H1 (cell line): ENCODE measurements at regions of chr7 and their contacts with region 1.

Region 1: DNA sequence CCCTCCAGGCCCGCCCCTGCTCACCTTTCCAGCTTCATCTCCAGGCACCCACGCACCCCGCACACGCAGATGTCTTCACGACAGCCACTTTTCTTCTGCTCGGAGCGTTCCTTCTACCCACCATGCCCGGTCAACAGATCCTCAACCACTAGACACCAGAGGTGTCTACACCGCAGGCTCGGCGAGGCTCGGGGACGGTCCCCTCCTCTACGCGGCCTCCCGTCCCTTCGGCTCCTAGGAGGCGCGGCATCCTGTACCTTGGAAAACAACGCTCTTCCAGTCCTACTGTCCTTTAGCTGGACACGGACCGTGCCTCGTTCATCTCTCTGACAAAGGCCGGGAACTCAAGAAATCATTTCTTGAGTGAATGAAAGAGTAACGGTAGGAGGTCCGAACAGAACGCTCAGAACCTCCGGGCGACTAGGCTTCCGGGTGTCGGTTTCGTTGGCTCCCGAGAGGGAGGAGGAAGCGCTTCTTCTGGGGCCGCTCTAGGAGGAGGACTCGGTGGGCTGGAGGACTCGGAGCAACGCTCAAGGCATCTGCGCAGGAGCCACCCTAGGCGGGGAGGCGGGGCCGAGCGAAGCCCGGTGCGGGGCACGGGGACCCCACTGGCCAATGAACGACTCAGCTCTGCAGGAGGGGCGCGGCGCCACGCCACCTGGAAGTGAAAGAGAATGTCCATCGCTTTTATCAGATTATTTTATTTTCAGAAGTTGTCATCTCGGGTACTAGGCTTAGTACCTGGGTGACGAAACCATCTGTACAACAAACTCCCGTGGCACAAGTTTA is 7.2 kb upstream of the FIS1 start:
- DNase-seq: peak; percentile 94 to 99
- H3K4me3 ChIP-seq: peak overlapping the region; percentile 86 to 98 (median 92)
- H3K27ac ChIP-seq: 0 out of 2 replicates have a peak overlapping the region, but pooled peaks have one; percentile 65
- H3K4me1 ChIP-seq: no peaks in the 10 kb centered on the region
- H3K27me3 ChIP-seq: no peaks in the 10 kb centered on the region
- CTCF ChIP-seq: no peak
- EP300 ChIP-seq: no peak
- POLR2A ChIP-seq: peak in 1 of 2 experiments; percentile 72; a peak in 2 of 3 replicates
- RAD21 ChIP-seq: no peak

Region 2: DNA sequence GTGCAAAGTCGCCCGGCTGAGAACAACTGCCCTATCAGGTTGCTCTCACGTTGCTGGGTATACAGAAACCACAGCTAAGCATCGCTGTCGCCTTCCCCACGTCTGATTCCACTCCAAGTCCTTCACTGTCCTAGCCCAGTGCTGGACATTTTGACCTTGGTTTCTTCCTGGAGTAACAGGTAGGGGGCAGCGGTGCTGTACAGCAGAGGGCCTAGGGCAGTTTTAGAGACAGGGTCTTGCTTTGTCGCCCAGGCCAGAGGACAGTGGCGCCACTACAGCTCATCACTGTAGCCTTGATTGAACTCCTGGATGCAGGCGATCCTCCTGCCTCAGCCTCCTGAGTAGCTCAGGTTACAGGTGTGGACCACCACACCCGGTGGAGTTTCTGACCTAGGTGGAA is 17.0 kb before region 1 on chr7:
- CTCF ChIA-PET with region 1: interaction called, 8 read pairs
- POLR2A ChIA-PET with region 1: interaction called, 10 read pairs
- DNase-seq: peak in 1 of 2 experiments; percentile 63
- H3K4me3 ChIP-seq: no peak overlapping the region
- H3K27ac ChIP-seq: no peak overlapping the region
- H3K4me1 ChIP-seq: peaks cover 0 to 24% (median 12%) of the 10 kb centered on the region in 4 experiments; a peak in 6 of 7 replicates
- H3K27me3 ChIP-seq: no peaks in the 10 kb centered on the region
- CTCF ChIP-seq: peak in 2 of 3 experiments; percentile 73; a peak in 3 of 4 replicates
- EP300 ChIP-seq: no peak
- POLR2A ChIP-seq: no peak
- RAD21 ChIP-seq: peak; percentile 69 to 78

Region 3: GRCh38 chr7:101265622-101266516 is 13.8 kb after region 1 on chr7:
- CTCF ChIA-PET with region 1: interaction called, 5 read pairs
- POLR2A ChIA-PET with region 1: interaction called, 14 read pairs
- DNase-seq: no peak
- H3K4me3 ChIP-seq: no peak overlapping the region
- H3K27ac ChIP-seq: no peak overlapping the region
- H3K4me1 ChIP-seq: peaks cover 0 to 3% (median 0%) of the 10 kb centered on the region in 4 experiments; a peak in 1 of 7 replicates
- H3K27me3 ChIP-seq: no peaks in the 10 kb centered on the region
- CTCF ChIP-seq: no peak
- EP300 ChIP-seq: no peak
- POLR2A ChIP-seq: no peak
- RAD21 ChIP-seq: no peak

Region 4: GRCh38 chr7:101273206-101273605 is 21.1 kb after region 1 on chr7:
- CTCF ChIA-PET with region 1: interaction called, 7 read pairs
- POLR2A ChIA-PET with region 1: interaction called, 14 read pairs
- DNase-seq: no peak
- H3K4me3 ChIP-seq: no peak overlapping the region
- H3K27ac ChIP-seq: no peak overlapping the region
- H3K4me1 ChIP-seq: peaks cover 0 to 10% (median 6%) of the 10 kb centered on the region in 4 experiments; a peak in 3 of 7 replicates
- H3K27me3 ChIP-seq: no peaks in the 10 kb centered on the region
- CTCF ChIP-seq: no peak
- EP300 ChIP-seq: no peak
- POLR2A ChIP-seq: no peak
- RAD21 ChIP-seq: no peak

Region 5: DNA sequence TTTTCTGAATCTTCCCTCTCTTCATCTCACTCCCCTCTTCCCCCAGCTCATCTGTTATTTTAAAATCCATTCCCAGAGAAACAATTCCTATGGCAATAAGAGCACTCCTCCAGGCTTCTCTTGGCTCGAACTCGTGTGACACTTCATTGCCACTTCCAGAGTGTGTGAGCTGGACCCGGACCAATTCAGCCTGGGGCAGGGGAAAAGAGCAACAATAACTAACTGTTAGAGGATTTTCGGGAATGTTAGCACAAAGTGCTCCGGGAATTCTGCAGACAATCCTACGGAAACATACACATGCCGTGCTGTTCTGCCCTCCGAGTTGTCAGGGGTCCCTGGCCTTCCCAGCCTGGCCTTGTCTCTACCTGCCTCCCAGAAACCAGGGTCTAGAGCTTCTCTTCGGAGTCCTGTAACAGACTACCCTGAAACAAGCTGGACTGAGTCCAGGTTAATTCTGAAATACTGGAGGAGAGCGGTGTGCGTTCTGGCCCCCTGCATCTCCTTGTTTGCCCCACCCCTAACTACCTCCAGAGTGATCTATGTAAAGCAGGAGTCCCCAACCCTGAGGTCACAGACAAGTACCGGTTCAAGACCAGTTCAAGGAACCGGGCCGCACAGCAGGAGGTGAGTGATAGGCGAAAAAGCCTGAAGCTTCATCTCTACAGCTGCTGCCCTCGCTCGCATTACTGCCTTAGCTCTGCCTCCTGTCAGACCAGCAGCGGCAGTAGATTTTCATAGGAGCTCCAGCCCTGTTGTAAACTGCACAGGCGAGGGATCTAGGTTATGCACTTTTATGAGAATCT is 121.9 kb after region 1 on chr7:
- CTCF ChIA-PET with region 1: no interaction called
- POLR2A ChIA-PET with region 1: no interaction called
- DNase-seq: no peak
- H3K4me3 ChIP-seq: no peak overlapping the region
- H3K27ac ChIP-seq: no peak overlapping the region
- H3K4me1 ChIP-seq: peaks cover 0 to 7% (median 4%) of the 10 kb centered on the region in 4 experiments; a peak in 5 of 7 replicates
- H3K27me3 ChIP-seq: no peaks in the 10 kb centered on the region
- CTCF ChIP-seq: no peak
- EP300 ChIP-seq: no peak
- POLR2A ChIP-seq: no peak
- RAD21 ChIP-seq: no peak